ENCODE measurements at regions of chr1 and their contacts with region 1.

Region 1: GRCh38 chr1:1122078-1122811 is 6.4 kb upstream of the C1orf159 start:
- DNase-seq: no peak
- H3K4me3 ChIP-seq: peak overlapping the region; percentile 22; the same call in 1 of the 2 replicates
- H3K27me3 ChIP-seq: peaks cover 4% of the 10 kb centered on the region
- CTCF ChIP-seq: peak; percentile 93

Region 2: GRCh38 chr1:890661-891060 is 231.6 kb before region 1 on chr1:
- CTCF ChIA-PET with region 1: no interaction called
- POLR2A ChIA-PET with region 1: no interaction called
- DNase-seq: no peak
- H3K4me3 ChIP-seq: no peak overlapping the region
- H3K27me3 ChIP-seq: peaks cover 12% of the 10 kb centered on the region
- CTCF ChIP-seq: no peak

Region 3: DNA sequence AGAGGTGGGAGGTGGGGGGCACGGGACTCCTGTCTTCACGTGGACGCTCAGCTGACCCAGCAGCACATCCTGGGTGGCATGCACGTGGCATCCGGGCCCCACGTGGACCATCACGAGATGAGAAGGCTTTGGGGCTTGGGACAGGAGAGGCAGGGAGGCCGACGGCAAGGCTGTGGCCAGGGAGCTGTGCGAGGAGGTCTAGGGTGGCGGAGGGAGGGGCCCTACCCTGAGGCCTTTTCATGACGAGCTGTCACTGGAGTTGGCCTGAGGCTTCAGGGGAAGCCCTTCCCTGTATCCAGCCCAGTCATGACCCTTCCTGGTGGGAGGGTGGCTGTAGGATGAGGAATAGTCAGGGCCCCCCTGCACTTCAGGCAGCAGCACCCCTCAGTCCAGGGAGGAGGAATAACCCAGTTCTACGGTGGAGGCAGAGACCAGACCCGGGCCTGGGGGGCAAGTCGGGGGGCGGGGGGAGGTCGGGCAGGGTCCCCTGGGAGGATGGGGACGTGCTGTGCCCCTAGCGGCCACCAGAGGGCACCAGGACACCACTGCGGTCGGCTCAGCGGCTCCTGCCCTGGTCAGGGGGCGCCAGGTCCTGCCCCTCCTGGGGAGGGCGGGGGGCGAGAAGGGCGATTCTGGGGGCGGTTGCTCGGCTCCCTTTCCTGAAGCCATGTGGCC is 138.3 kb before region 1 on chr1:
- CTCF ChIA-PET with region 1: interaction called, 14 read pairs
- POLR2A ChIA-PET with region 1: no interaction called
- DNase-seq: no peak
- H3K4me3 ChIP-seq: 0 out of 2 replicates have a peak overlapping the region, but pooled peaks have one; percentile 21
- H3K27me3 ChIP-seq: no peaks in the 10 kb centered on the region
- CTCF ChIP-seq: peak; percentile 96

Region 4: DNA sequence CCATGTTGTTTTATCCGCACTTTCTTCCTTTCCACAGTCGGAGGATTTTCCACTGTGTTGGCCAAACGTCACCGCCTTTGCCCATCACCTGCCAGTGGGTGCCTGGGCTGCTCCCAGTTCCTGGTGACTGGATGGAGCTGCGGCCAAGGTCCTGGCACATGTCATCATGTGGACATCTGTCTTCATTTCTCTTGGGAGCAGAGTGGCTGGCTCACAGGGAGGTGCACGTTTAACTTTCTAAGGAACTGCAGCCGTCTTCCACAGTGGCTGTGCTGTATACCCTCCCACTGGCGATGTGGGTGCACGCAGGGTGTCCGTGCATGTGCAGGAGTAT is 28.7 kb before region 1 on chr1:
- CTCF ChIA-PET with region 1: no interaction called
- POLR2A ChIA-PET with region 1: no interaction called
- DNase-seq: no peak
- H3K4me3 ChIP-seq: no peak overlapping the region
- H3K27me3 ChIP-seq: no peaks in the 10 kb centered on the region
- CTCF ChIP-seq: no peak

Region 5: GRCh38 chr1:1153874-1154273 is 31.6 kb after region 1 on chr1:
- CTCF ChIA-PET with region 1: interaction called, 12 read pairs
- POLR2A ChIA-PET with region 1: no interaction called
- DNase-seq: no peak
- H3K4me3 ChIP-seq: no peak overlapping the region
- H3K27me3 ChIP-seq: no peaks in the 10 kb centered on the region
- CTCF ChIP-seq: no peak

Region 6: DNA sequence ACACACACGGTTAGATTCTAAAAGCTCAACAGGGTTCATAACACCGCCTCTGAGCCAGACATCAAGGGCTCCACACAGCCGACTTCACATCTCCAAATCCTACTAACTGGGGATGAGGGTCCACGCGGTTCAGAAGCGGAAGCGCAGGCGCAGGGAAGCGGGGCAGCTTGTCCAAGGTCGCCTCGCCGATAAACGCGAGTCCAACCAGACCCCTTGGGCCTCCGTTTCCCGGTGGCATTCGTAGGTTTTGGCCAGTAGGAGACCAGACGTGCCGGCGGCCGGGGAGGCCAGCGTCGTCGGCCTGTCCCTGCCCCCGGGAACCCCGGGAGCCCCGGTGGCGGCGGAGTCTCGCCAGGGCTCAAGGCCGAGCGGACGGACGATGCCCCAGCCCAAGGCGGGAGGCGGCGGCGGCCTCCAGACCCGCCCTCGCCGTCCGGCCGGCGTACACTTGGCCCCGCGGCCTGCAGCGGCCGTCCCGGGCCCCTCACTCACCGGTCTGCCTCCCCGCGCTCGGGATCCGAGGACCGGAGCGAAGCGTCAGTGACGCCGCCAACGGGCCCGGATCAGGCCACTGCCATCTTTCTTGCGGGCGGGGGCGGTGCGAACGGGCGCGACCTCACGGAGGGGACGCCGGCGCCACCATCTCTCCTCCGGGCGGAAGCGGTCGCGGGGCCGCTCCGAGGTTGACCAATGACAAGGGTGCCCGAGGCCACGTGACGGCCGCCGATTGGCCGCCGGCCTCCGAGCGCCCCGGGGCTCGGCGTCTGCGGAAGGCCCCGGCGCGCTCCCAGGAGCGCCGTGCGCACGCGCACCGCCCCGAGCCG is 109.4 kb after region 1 on chr1 and contains the start of gene SDF4:
- CTCF ChIA-PET with region 1: interaction called, 32 read pairs
- POLR2A ChIA-PET with region 1: no interaction called
- DNase-seq: peak; percentile 68
- H3K4me3 ChIP-seq: peak within 1 kb of the TSS; percentile 86
- H3K27me3 ChIP-seq: no peaks in the 10 kb centered on the region
- CTCF ChIP-seq: no peak
- polyA plus RNA-seq, gene SDF4: 119 and 188 TPM in 2 replicates

Region 7: DNA sequence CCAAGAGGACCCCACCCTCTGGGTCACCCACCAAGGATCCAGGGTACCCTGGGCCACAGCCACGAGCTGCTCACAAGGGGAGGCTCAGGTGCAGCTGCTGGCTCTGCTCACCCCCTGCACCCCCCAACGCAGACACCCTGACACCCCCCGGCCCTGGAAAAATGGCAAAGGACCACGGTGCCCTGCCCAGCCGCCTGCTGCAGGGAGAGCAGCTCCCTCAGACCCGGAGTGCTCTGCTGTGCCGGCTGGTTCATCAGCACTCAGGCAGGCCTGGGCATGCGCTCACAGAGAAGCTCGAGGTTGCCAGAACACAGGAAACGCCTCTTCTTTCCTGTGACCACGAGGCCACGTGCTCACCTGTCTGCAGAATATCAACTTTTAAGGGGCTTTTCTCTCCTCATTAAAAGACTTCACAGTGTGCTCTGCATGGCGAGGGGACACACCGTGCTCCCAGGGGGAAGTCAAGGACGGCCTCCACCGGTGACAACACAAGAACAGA is 128.6 kb after region 1 on chr1:
- CTCF ChIA-PET with region 1: interaction called, 22 read pairs
- POLR2A ChIA-PET with region 1: no interaction called
- DNase-seq: no peak
- H3K4me3 ChIP-seq: no peak overlapping the region
- H3K27me3 ChIP-seq: no peaks in the 10 kb centered on the region
- CTCF ChIP-seq: no peak

Region 8: DNA sequence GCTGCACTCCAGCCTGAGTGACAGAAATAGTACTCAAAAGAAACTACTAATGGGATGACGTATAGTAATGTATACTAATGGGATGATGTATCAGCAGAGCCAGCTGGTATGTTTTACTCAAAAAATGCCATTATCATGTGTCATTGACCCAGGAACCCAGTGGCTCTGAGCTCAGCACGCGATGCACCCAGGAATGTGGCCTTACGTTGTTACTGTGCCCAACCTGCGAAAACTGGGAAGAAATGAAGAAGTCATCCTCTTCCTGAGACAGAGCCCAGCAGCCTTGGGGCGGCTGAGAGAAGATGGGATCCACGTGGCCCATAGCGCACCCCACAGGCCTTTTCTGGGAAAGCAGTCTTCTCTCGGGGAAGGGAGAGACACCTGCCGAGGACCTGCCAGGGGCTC is 142.6 kb after region 1 on chr1:
- CTCF ChIA-PET with region 1: interaction called, 30 read pairs
- POLR2A ChIA-PET with region 1: no interaction called
- DNase-seq: peak; percentile 94
- H3K4me3 ChIP-seq: no peak overlapping the region
- H3K27me3 ChIP-seq: no peaks in the 10 kb centered on the region
- CTCF ChIP-seq: peak; percentile 65

Region 9: DNA sequence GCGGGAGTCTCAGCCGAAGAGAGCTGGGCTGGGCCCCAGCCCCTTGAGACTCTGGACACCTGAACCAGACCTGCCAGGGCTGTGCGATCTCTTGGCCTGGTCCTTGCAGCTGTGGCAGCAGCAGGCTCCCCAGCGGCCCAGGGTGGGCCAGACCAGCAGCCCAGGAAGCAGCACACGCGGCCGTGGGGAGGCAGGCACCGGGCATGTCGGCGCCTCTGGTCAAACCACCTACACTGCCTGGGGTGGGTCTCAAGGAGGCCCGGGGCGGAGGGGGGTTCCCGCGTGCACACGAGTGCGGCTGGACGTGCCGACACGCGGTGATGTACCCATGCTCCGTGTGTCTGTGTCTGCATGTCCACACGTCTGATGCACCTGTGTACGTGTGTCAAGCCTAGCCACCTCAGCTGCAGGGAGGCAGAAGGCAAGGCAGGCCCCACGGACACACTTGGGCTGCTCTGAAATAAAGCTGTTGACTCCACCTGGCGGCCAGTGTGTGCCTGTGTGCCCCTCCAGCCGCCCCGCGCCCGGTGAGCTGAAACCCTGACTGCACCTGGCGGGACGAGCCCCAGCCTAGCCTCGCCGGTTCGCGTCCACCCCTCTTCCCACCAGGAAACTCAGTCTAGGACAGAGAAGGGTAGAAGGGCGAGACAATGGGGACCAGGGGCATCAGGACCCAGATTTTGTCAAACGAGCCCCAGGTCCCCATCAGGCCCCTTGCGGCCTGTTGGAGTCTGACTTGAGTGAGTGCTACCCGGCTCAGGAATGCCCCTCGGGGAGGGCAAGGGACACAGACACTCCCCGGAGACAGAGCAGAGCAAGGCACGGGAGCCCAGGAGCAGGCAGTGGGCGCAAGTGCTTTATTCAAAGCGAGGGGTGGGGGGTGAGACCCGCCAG is 169.6 kb after region 1 on chr1:
- CTCF ChIA-PET with region 1: interaction called, 76 read pairs
- POLR2A ChIA-PET with region 1: no interaction called
- DNase-seq: no peak
- H3K4me3 ChIP-seq: no peak overlapping the region
- H3K27me3 ChIP-seq: no peaks in the 10 kb centered on the region
- CTCF ChIP-seq: peak; percentile 57

Measured in BJ (cell line).